Colonic mucosa (tissue), 4 donors: ENCODE measurements at regions of chr16 and their contacts with region 1.

Region 1: GRCh38 chr16:483341-484075 is 44.0 kb upstream of the CAPN15 start:
- DNase-seq: no peak
- H3K4me3 ChIP-seq: no peak overlapping the region
- H3K27ac ChIP-seq: no peak overlapping the region
- H3K4me1 ChIP-seq: no peaks in the 10 kb centered on the region
- H3K27me3 ChIP-seq: no peaks in the 10 kb centered on the region
- CTCF ChIP-seq: no peak

Region 2: DNA sequence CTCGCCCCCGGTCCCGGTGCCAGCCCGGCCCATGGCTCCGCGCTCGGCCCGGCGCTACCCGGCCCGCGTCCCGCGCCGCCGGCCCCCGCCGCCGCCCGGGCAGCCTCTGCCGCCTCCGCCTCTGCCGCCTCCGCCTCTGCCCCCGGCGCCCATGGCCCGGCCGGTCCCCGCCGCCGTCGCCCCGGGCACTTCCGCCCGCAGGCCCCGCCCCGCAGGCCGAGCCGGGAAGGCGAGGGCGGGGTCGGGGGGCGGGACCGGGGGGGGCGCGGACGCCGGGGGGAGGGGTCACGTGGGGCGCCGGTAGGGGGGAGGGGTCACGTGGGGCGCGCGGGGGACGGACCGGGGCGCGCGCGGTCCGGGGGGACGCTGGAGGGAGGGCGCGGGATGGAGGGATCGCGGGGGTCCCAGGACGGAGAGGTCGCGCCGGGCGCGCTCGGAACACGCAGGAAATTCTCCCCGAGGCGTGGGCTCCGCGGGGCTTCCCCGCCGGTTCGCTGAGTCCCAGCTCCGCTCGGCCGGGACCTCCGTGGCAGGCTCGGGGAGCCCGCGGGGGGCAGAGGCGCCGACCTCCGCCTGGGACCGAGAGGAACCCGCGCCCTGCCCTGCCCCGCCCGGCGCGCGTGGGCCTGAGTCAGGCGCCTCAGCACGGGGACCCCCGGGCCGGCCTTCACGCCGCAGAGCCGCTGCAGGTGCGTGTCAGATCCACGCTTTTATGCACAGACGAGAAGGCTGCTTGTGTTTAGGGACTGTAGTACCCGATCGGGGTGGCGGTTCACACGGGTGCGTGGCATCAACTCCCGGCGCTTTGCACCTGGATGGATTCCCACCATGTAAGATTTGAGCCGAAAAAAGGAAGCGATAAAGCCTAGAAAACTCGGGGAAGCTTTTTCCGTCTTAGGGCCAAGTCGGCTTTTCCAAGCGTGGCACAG is 101.5 kb before region 1 on chr16 and contains the start of gene PGAP6:
- intact Hi-C with region 1: loop called (anchors 10 kb)
- DNase-seq: peak; percentile 63
- H3K4me3 ChIP-seq: peak within 1 kb of the TSS; percentile 98
- H3K27ac ChIP-seq: peak within 1 kb of the TSS; percentile 85
- H3K4me1 ChIP-seq: peaks cover 19% of the 10 kb centered on the region
- H3K27me3 ChIP-seq: no peaks in the 10 kb centered on the region
- CTCF ChIP-seq: no peak
- total RNA-seq, gene PGAP6: 99.6 to 102 TPM